CD4-positive, alpha-beta T cell (primary cell): ENCODE measurements at regions of chr4 and their contacts with region 1.

Region 1: GRCh38 chr4:55184600-55185523 is 59.5 kb upstream of the KDR start:
- DNase-seq: peak in 8 of 14 experiments; percentile 1 to 52 (median 18)
- ATAC-seq: no peak
- H3K4me3 ChIP-seq: no peak overlapping the region
- H3K4me3 Mint-ChIP-seq: no peak overlapping the region
- H3K27ac ChIP-seq: no peak overlapping the region
- H3K27ac Mint-ChIP-seq: no peak overlapping the region
- H3K4me1 ChIP-seq: no peaks in the 10 kb centered on the region
- H3K4me1 Mint-ChIP-seq: no peaks in the 10 kb centered on the region
- H3K27me3 ChIP-seq: peaks cover 0 to 7% of the 10 kb centered on the region in 2 experiments
- H3K27me3 Mint-ChIP-seq: peaks cover 19% of the 10 kb centered on the region
- CTCF ChIP-seq: peak; percentile 32

Region 2: DNA sequence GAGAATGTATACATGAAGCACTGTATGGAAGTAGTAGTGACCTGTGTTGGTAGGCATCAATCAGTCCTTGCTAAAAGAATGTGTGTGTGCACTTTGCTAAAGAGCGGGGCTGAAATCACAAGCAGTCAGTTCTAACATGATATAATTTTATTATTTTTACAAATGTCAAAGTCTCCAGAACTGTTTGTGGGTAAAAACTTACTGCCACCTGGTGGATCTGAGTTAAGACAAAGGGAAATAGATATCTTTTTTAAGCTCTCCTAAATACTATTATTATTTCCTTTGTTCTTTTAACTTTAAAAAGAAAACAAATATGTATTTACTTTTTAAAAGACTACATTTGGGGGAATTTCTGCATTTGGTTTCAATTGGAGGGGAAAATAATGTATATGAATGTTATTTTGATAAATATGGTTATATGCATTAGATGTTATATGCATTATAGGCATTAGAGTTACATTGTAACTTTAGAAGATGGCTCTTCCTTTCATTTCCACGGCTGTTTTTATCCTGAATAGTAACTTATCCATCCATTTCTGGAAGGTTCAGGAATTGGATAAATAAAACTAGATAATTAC is 369.7 kb after region 1 on chr4:
- CTCF ChIA-PET with region 1: no interaction called
- POLR2A ChIA-PET with region 1: no interaction called
- intact Hi-C with region 1: loop called (anchors 5 to 10 kb)
- DNase-seq: peak in 4 of 14 experiments; percentile 10 to 65 (median 62)
- ATAC-seq: peak; percentile 55
- H3K4me3 ChIP-seq: no peak overlapping the region
- H3K4me3 Mint-ChIP-seq: no peak overlapping the region
- H3K27ac ChIP-seq: no peak overlapping the region
- H3K27ac Mint-ChIP-seq: no peak overlapping the region
- H3K4me1 ChIP-seq: no peaks in the 10 kb centered on the region
- H3K4me1 Mint-ChIP-seq: no peaks in the 10 kb centered on the region
- H3K27me3 ChIP-seq: no peaks in the 10 kb centered on the region
- H3K27me3 Mint-ChIP-seq: peaks cover 4% of the 10 kb centered on the region
- CTCF ChIP-seq: peak; percentile 78

Region 3: GRCh38 chr4:55736605-55737183 is 551.8 kb after region 1 on chr4:
- CTCF ChIA-PET with region 1: no interaction called
- POLR2A ChIA-PET with region 1: no interaction called
- intact Hi-C with region 1: loop called in 1 of 2 experiments (anchors 10 kb)
- DNase-seq: peak in 2 of 14 experiments; percentile 8 to 11
- ATAC-seq: no peak
- H3K4me3 ChIP-seq: no peak overlapping the region
- H3K4me3 Mint-ChIP-seq: no peak overlapping the region
- H3K27ac ChIP-seq: no peak overlapping the region
- H3K27ac Mint-ChIP-seq: no peak overlapping the region
- H3K4me1 ChIP-seq: no peaks in the 10 kb centered on the region
- H3K4me1 Mint-ChIP-seq: no peaks in the 10 kb centered on the region
- H3K27me3 ChIP-seq: peaks cover 0 to 11% of the 10 kb centered on the region in 2 experiments
- H3K27me3 Mint-ChIP-seq: peaks cover 54% of the 10 kb centered on the region
- CTCF ChIP-seq: no peak

Region 4: DNA sequence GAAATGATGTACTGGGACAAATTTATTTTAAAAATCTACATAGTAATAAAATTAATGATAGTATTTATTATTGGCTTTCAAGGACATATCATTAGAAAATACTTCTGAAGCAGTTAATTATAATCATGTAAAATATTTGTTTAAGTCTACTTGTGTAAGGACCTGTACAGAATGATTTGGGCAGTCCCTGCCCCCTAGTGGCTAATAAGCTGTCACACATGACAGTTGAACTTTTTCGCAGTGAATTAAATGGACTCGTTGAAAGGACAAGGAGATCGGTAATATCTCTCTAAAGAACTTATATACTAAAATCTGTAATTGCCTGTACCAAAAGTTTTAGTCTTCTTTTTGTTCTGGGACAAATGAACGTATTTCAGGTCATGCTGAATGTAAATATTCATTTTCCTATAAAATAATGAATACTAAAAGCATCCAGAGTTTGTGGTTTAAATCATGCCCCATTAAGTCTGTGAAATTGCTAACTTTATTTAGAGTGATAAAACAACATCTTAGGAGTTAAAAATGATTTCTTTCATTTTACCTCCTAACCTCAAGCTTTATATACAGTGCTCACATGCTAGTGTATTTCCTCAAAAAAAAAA is 682.2 kb after region 1 on chr4:
- CTCF ChIA-PET with region 1: no interaction called
- POLR2A ChIA-PET with region 1: no interaction called
- intact Hi-C with region 1: loop called in 1 of 2 experiments (anchors 5 kb)
- DNase-seq: peak in 6 of 14 experiments; percentile 9 to 74 (median 50)
- ATAC-seq: peak; percentile 91
- H3K4me3 ChIP-seq: no peak overlapping the region
- H3K4me3 Mint-ChIP-seq: no peak overlapping the region
- H3K27ac ChIP-seq: no peak overlapping the region
- H3K27ac Mint-ChIP-seq: no peak overlapping the region
- H3K4me1 ChIP-seq: no peaks in the 10 kb centered on the region
- H3K4me1 Mint-ChIP-seq: peaks cover 17% of the 10 kb centered on the region
- H3K27me3 ChIP-seq: no peaks in the 10 kb centered on the region
- H3K27me3 Mint-ChIP-seq: no peaks in the 10 kb centered on the region
- CTCF ChIP-seq: peak; percentile 99